GM12878 (cell line): ENCODE measurements at regions of chr4 and their contacts with region 1.

Region 1: GRCh38 chr4:81471588-81472288 is at the start of gene RASGEF1B:
- DNase-seq: peak; percentile 16
- ATAC-seq: peak; percentile 98
- H3K4me3 ChIP-seq: peak within 1 kb of the TSS; percentile 63
- H3K27ac ChIP-seq: no peak within 1 kb of the TSS
- H3K4me1 ChIP-seq: peaks cover 13% of the 10 kb centered on the region
- H3K27me3 ChIP-seq: peaks cover 4 to 9% of the 10 kb centered on the region in 2 experiments
- CTCF ChIP-seq: no peak
- EP300 ChIP-seq: peak in 1 of 2 experiments; percentile 22; a peak in 1 of 4 replicates
- POLR2A ChIP-seq: peak; percentile 44; the same call in 1 of the 2 replicates
- RAD21 ChIP-seq: no peak
- polyA plus RNA-seq, gene RASGEF1B: not detected

Region 2: GRCh38 chr4:81272671-81273070 is 199.1 kb before region 1 on chr4:
- CTCF ChIA-PET with region 1: no interaction called
- POLR2A ChIA-PET with region 1: no interaction called
- RAD21 ChIA-PET with region 1: no interaction called
- SMC1A ChIA-PET with region 1: no interaction called
- in situ Hi-C with region 1: no loop called
- intact Hi-C with region 1: no loop called
- DNase-seq: no peak
- ATAC-seq: no peak
- H3K4me3 ChIP-seq: no peak overlapping the region
- H3K27ac ChIP-seq: no peak overlapping the region
- H3K4me1 ChIP-seq: no peaks in the 10 kb centered on the region
- H3K27me3 ChIP-seq: no peaks in the 10 kb centered on the region
- CTCF ChIP-seq: no peak
- EP300 ChIP-seq: no peak
- POLR2A ChIP-seq: no peak
- RAD21 ChIP-seq: no peak

Region 3: GRCh38 chr4:81296045-81296444 is 175.7 kb before region 1 on chr4:
- CTCF ChIA-PET with region 1: no interaction called
- POLR2A ChIA-PET with region 1: no interaction called
- RAD21 ChIA-PET with region 1: no interaction called
- SMC1A ChIA-PET with region 1: no interaction called
- in situ Hi-C with region 1: no loop called
- intact Hi-C with region 1: no loop called
- DNase-seq: no peak
- ATAC-seq: no peak
- H3K4me3 ChIP-seq: no peak overlapping the region
- H3K27ac ChIP-seq: no peak overlapping the region
- H3K4me1 ChIP-seq: no peaks in the 10 kb centered on the region
- H3K27me3 ChIP-seq: no peaks in the 10 kb centered on the region
- CTCF ChIP-seq: no peak
- EP300 ChIP-seq: no peak
- POLR2A ChIP-seq: no peak
- RAD21 ChIP-seq: no peak

Region 4: GRCh38 chr4:81454499-81454898 is 17.2 kb before region 1 on chr4:
- CTCF ChIA-PET with region 1: interaction called, 20 read pairs
- POLR2A ChIA-PET with region 1: no interaction called
- RAD21 ChIA-PET with region 1: interaction called, 3 read pairs
- SMC1A ChIA-PET with region 1: interaction called, 4 read pairs
- in situ Hi-C with region 1: no loop called
- intact Hi-C with region 1: no loop called
- DNase-seq: no peak
- ATAC-seq: no peak
- H3K4me3 ChIP-seq: no peak overlapping the region
- H3K27ac ChIP-seq: no peak overlapping the region
- H3K4me1 ChIP-seq: no peaks in the 10 kb centered on the region
- H3K27me3 ChIP-seq: no peaks in the 10 kb centered on the region
- CTCF ChIP-seq: no peak
- EP300 ChIP-seq: no peak
- POLR2A ChIP-seq: no peak
- RAD21 ChIP-seq: no peak

Region 5: DNA sequence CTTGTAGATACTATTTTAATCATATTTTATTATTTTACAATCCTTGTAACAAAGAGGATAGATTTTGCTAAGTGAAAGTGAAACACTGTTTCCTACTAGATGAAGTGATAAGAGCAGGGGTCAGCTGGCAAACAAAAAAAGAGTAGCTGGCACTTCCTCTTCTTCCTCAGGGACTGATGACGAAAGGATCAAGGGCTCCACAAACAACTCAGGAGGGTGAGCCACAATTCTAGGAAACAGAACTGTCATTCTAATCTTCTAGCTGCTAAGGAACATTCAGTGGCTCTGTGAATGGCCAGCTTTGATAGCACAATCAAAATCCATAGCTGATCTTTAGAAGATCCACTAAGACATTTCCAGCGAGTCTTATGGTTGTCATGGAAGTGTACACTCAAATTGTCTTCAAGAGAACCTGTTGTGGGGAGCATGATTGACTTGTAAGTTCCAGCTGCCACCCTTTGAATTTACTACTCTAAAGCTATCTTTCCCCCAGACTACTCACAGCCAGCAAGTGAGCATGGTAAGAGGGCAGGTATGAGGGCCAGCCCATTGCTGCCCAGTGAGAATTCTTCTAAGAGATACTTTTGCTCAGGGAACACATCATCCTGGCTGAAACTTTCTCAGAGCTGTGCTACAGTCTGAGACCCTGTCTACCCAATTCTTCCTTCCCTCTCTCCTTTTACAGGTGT is 275.6 kb after region 1 on chr4:
- CTCF ChIA-PET with region 1: no interaction called
- POLR2A ChIA-PET with region 1: no interaction called
- RAD21 ChIA-PET with region 1: no interaction called
- SMC1A ChIA-PET with region 1: no interaction called
- in situ Hi-C with region 1: no loop called
- intact Hi-C with region 1: loop called (anchors 10 kb)
- DNase-seq: no peak
- ATAC-seq: no peak
- H3K4me3 ChIP-seq: no peak overlapping the region
- H3K27ac ChIP-seq: no peak overlapping the region
- H3K4me1 ChIP-seq: no peaks in the 10 kb centered on the region
- H3K27me3 ChIP-seq: no peaks in the 10 kb centered on the region
- CTCF ChIP-seq: no peak
- EP300 ChIP-seq: no peak
- POLR2A ChIP-seq: no peak
- RAD21 ChIP-seq: no peak

Region 6: GRCh38 chr4:81844717-81845116 is 373.0 kb after region 1 on chr4:
- CTCF ChIA-PET with region 1: interaction called, 114 read pairs
- POLR2A ChIA-PET with region 1: no interaction called
- RAD21 ChIA-PET with region 1: interaction called, 77 read pairs
- SMC1A ChIA-PET with region 1: interaction called, 110 read pairs
- in situ Hi-C with region 1: loop called (anchors 5 kb)
- intact Hi-C with region 1: loop called (anchors 1 kb)
- DNase-seq: peak; percentile 12
- ATAC-seq: peak; percentile 93
- H3K4me3 ChIP-seq: no peak overlapping the region
- H3K27ac ChIP-seq: no peak overlapping the region
- H3K4me1 ChIP-seq: no peaks in the 10 kb centered on the region
- H3K27me3 ChIP-seq: no peaks in the 10 kb centered on the region; a peak in 1 of 4 replicates
- CTCF ChIP-seq: peak; percentile 74 to 81 (median 77)
- EP300 ChIP-seq: no peak
- POLR2A ChIP-seq: no peak
- RAD21 ChIP-seq: peak; percentile 90

Region 7: GRCh38 chr4:81913427-81913879 is 441.7 kb after region 1 on chr4:
- CTCF ChIA-PET with region 1: interaction called, 11 read pairs
- POLR2A ChIA-PET with region 1: no interaction called
- RAD21 ChIA-PET with region 1: no interaction called
- SMC1A ChIA-PET with region 1: interaction called, 5 read pairs
- in situ Hi-C with region 1: no loop called
- intact Hi-C with region 1: no loop called
- DNase-seq: no peak
- ATAC-seq: peak; percentile 94
- H3K4me3 ChIP-seq: no peak overlapping the region
- H3K27ac ChIP-seq: no peak overlapping the region
- H3K4me1 ChIP-seq: no peaks in the 10 kb centered on the region
- H3K27me3 ChIP-seq: no peaks in the 10 kb centered on the region
- CTCF ChIP-seq: peak; percentile 71 to 84 (median 74)
- EP300 ChIP-seq: no peak
- POLR2A ChIP-seq: no peak
- RAD21 ChIP-seq: peak; percentile 31; the same call in 1 of the 2 replicates

Region 8: GRCh38 chr4:82201805-82202641 is 730.3 kb after region 1 on chr4:
- CTCF ChIA-PET with region 1: interaction called, 13 read pairs
- POLR2A ChIA-PET with region 1: no interaction called
- RAD21 ChIA-PET with region 1: no interaction called
- SMC1A ChIA-PET with region 1: interaction called, 9 read pairs
- in situ Hi-C with region 1: loop called (anchors 5 kb)
- intact Hi-C with region 1: loop called (anchors 1 kb)
- DNase-seq: no peak
- ATAC-seq: peak; percentile 81
- H3K4me3 ChIP-seq: no peak overlapping the region
- H3K27ac ChIP-seq: no peak overlapping the region
- H3K4me1 ChIP-seq: no peaks in the 10 kb centered on the region
- H3K27me3 ChIP-seq: no peaks in the 10 kb centered on the region
- CTCF ChIP-seq: peak; percentile 56 to 65 (median 60)
- EP300 ChIP-seq: no peak
- POLR2A ChIP-seq: no peak
- RAD21 ChIP-seq: peak; percentile 85